Caco-2 (cell line): ENCODE measurements at regions of chr2 and their contacts with region 1.

Region 1: DNA sequence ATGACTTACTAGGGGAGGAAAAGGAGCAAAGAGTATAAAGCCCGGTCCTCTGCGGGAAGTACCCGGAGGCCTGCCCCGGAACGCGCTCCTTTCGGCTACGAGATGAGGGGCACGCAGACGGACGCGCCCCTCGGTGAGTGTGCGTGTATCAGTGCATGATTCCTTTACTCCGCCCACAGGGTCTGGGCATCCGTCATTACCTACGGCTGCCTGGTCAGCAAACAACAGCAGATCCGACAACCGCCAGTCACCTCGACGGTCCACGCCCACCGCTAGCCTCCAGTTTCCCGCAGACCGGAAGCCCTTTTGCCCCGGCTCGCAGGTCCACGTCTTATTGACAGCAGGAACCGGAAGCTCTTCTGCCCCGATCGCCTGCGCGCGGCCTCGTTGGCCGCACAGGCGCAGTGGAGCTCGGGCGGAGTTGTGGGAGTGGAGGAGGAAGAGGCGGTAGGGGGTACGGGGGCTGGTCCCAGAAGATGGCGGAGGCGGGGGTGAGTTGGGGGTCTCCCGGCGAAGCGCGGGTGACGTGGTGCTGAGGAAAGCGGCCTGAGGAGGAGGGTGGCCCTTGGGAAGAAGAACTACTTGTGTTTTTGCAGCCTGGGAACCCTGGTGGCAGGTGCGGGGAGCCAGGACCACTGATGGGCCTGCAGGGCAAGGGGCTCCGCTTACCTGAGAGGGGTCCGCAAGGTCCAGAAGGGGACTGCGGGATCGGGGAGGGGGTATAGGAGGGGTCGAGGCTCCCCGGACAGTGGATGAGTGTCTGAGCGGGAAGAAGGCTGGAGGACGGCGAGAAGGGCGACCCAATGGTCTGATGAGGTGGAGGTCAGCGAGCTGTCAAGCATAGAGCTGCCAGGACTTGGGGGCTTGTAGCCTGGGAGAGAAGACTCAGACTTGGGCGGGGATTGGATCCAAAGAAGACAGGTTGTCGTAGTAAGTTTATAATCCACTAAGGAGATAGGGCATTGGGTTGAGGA is at the start of gene INSIG2:
- DNase-seq: peak; percentile 97 to 99
- H3K4me3 ChIP-seq: peak within 1 kb of the TSS; percentile 88
- H3K4me3 Mint-ChIP-seq: peak within 1 kb of the TSS; percentile 82
- H3K27ac Mint-ChIP-seq: peak within 1 kb of the TSS; percentile 72
- H3K4me1 ChIP-seq: 0 out of 2 replicates have a peak, but pooled peaks cover 16% of the 10 kb centered on the region
- H3K4me1 Mint-ChIP-seq: no peaks in the 10 kb centered on the region
- H3K27me3 ChIP-seq: no peaks in the 10 kb centered on the region
- H3K27me3 Mint-ChIP-seq: peaks cover 5% of the 10 kb centered on the region
- CTCF ChIP-seq: peak in 1 of 2 experiments; percentile 14
- total RNA-seq, gene INSIG2: 12.2 and 14.1 TPM in 2 replicates

Region 2: GRCh38 chr2:117958186-117958585 is 130.2 kb before region 1 on chr2:
- CTCF ChIA-PET with region 1: no interaction called
- POLR2A ChIA-PET with region 1: no interaction called
- intact Hi-C with region 1: no loop called
- DNase-seq: peak; percentile 36 to 44
- H3K4me3 ChIP-seq: no peak overlapping the region
- H3K4me3 Mint-ChIP-seq: no peak overlapping the region
- H3K27ac Mint-ChIP-seq: peak overlapping the region; percentile 72
- H3K4me1 ChIP-seq: peaks cover 23% of the 10 kb centered on the region
- H3K4me1 Mint-ChIP-seq: peaks cover 25% of the 10 kb centered on the region
- H3K27me3 ChIP-seq: no peaks in the 10 kb centered on the region
- H3K27me3 Mint-ChIP-seq: no peaks in the 10 kb centered on the region
- CTCF ChIP-seq: no peak

Region 3: GRCh38 chr2:118013724-118014491 is 74.4 kb before region 1 on chr2 and contains the start of gene CCDC93:
- CTCF ChIA-PET with region 1: no interaction called
- POLR2A ChIA-PET with region 1: no interaction called
- intact Hi-C with region 1: loop called (anchors 2 kb)
- DNase-seq: peak; percentile 73 to 89
- H3K4me3 ChIP-seq: peak within 1 kb of the TSS; percentile 99
- H3K4me3 Mint-ChIP-seq: peak within 1 kb of the TSS; percentile 95
- H3K27ac Mint-ChIP-seq: peak within 1 kb of the TSS; percentile 40
- H3K4me1 ChIP-seq: peaks cover 4% of the 10 kb centered on the region; the same call in 1 of the 2 replicates
- H3K4me1 Mint-ChIP-seq: peaks cover 7% of the 10 kb centered on the region
- H3K27me3 ChIP-seq: no peaks in the 10 kb centered on the region
- H3K27me3 Mint-ChIP-seq: peaks cover 6% of the 10 kb centered on the region
- CTCF ChIP-seq: no peak
- total RNA-seq, gene CCDC93: 34.7 and 35.4 TPM in 2 replicates

Region 4: GRCh38 chr2:118106926-118107325 is 18.6 kb after region 1 on chr2:
- CTCF ChIA-PET with region 1: no interaction called
- POLR2A ChIA-PET with region 1: no interaction called
- intact Hi-C with region 1: no loop called
- DNase-seq: no peak
- H3K4me3 ChIP-seq: no peak overlapping the region
- H3K4me3 Mint-ChIP-seq: no peak overlapping the region
- H3K27ac Mint-ChIP-seq: no peak overlapping the region
- H3K4me1 ChIP-seq: no peaks in the 10 kb centered on the region
- H3K4me1 Mint-ChIP-seq: no peaks in the 10 kb centered on the region
- H3K27me3 ChIP-seq: no peaks in the 10 kb centered on the region
- H3K27me3 Mint-ChIP-seq: no peaks in the 10 kb centered on the region
- CTCF ChIP-seq: no peak

Region 5: DNA sequence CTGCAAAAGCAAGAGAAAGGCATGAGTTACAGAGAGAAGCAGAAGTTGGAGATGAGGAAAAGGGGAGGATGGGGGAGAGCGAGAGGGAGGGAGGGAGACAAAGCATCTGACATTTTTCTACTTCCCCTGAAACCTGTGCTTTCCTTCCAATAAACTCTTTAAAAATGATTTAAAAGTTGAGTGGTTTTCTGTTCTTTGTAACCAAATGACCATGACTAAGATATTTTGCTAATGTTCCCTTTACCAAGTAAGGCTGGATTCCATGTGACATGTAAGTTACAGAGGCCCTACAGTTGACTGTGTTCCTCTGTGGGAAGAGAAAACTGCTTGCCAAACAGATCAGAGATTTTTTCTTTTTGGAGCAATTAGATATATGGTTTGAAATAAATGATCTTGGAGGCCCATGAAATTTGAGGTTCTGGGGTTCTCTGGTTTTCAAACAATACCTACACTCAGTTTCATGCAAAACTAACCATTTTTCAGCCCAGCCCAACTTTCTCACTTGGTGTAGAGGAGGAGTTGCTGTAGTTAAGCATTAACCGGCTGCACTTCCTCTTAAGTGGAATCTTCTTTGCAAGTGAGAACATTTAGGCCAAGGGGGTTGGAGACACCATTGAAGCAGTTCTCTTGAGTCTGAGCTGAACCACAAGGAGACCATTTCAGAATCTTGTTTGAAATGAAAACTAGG is 34.4 kb after region 1 on chr2:
- CTCF ChIA-PET with region 1: no interaction called
- POLR2A ChIA-PET with region 1: no interaction called
- intact Hi-C with region 1: loop called (anchors 2 kb)
- DNase-seq: no peak
- H3K4me3 ChIP-seq: no peak overlapping the region
- H3K4me3 Mint-ChIP-seq: no peak overlapping the region
- H3K27ac Mint-ChIP-seq: no peak overlapping the region
- H3K4me1 ChIP-seq: peaks cover 13% of the 10 kb centered on the region
- H3K4me1 Mint-ChIP-seq: peaks cover 12% of the 10 kb centered on the region
- H3K27me3 ChIP-seq: no peaks in the 10 kb centered on the region
- H3K27me3 Mint-ChIP-seq: no peaks in the 10 kb centered on the region
- CTCF ChIP-seq: no peak

Region 6: DNA sequence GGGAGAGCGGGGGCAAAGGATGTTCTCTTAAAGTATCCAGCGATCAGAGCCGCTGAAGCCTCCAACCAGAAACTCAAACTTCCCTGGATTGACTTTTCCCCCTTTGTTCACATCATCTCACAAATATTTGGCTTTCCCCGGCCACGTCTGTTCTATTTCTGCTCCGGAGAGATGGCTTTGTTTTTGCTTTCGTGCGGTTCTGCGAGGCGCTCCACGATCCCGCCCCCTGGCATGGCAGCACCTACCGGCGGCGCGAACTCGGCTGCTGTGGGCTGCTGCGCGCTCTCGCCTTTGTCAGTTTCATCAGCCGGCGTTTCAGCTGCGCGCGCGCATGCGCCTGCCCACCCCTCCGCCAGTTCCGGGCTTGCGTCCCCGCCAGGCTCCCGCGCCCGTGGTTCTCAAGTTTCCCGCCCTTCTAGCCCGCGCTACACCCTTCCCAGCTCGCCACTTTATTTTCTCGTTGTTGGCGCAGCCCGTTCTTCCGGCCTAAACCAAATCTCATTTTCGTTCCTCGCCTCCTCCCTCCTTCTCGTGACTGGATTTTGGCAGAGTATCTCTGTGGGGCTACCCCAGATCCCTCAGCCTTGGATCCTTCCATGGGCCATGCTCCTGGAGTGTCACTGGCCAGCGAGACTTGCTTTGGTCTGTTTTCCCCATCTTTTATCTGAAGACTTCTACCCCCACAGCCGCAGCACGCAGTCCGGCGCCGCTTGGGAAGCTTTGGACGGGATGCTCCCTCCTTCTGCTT is 97.9 kb after region 1 on chr2:
- CTCF ChIA-PET with region 1: no interaction called
- POLR2A ChIA-PET with region 1: no interaction called
- intact Hi-C with region 1: loop called (anchors 2 kb)
- DNase-seq: peak; percentile 86 to 88
- H3K4me3 ChIP-seq: peak overlapping the region; percentile 59
- H3K4me3 Mint-ChIP-seq: peak overlapping the region; percentile 88
- H3K27ac Mint-ChIP-seq: peak overlapping the region; percentile 84
- H3K4me1 ChIP-seq: no peaks in the 10 kb centered on the region
- H3K4me1 Mint-ChIP-seq: peaks cover 5% of the 10 kb centered on the region
- H3K27me3 ChIP-seq: no peaks in the 10 kb centered on the region
- H3K27me3 Mint-ChIP-seq: peaks cover 3% of the 10 kb centered on the region
- CTCF ChIP-seq: no peak